ENCODE measurements at regions of chr5 and their contacts with region 1.

Region 1: GRCh38 chr5:145951071-145951470 is 14.7 kb downstream of the SH3RF2 start:
- DNase-seq: no peak
- H3K4me3 ChIP-seq: no peak overlapping the region
- CTCF ChIP-seq: no peak

Region 2: GRCh38 chr5:146007270-146007669 is 56.2 kb after region 1 on chr5:
- in situ Hi-C with region 1: loop called (anchors 5 kb)
- DNase-seq: no peak
- H3K4me3 ChIP-seq: no peak overlapping the region
- CTCF ChIP-seq: no peak

Region 3: GRCh38 chr5:146041180-146041789 is 90.2 kb after region 1 on chr5:
- in situ Hi-C with region 1: no loop called
- DNase-seq: no peak
- H3K4me3 ChIP-seq: no peak overlapping the region
- CTCF ChIP-seq: peak; percentile 30

Region 4: DNA sequence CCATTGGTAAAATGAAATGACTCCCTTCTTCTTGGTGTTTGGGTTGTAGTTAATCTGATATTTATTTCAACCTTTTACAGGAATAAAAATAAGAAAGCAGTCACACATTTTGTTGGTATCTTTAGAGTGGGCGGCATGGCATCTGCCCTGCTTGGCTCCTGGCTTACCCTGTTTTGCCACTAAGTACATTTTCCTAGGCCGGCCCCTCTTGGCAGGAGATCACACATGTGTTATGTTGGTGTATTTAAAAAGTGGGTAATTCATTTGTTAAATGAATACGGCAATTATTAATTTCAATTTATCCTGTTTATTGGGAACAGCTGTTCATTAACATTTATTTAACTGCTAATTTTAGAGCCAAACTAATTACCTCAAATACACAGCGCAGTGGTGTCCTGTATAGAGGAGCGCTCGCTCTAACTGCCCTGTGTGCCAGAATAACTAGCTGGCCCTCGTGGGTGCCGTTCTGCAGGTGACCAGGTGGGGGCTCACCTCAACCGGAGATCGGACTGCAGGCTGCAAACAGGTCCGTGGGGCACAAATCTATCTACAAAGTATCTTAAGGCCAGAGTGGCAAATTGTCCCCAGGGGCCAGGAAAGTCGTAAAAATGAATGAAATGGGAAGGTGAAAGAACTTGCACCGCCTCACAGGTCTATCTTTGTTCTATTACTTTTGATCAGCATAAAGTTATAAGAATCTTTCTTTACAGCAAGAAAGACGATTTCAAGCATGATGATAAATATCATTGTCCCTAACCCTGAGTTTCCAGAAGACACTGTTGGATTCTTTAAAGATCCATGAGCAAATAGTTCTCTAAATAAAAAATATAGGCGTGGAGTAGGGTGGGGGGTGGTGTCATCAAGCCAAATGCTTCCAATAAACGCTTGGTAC is 591.1 kb after region 1 on chr5:
- in situ Hi-C with region 1: no loop called
- DNase-seq: peak; percentile 47
- H3K4me3 ChIP-seq: no peak overlapping the region
- CTCF ChIP-seq: peak; percentile 98